Endothelial cell of umbilical vein (primary cell): ENCODE measurements at regions of chr12 and their contacts with region 1.

Region 1: DNA sequence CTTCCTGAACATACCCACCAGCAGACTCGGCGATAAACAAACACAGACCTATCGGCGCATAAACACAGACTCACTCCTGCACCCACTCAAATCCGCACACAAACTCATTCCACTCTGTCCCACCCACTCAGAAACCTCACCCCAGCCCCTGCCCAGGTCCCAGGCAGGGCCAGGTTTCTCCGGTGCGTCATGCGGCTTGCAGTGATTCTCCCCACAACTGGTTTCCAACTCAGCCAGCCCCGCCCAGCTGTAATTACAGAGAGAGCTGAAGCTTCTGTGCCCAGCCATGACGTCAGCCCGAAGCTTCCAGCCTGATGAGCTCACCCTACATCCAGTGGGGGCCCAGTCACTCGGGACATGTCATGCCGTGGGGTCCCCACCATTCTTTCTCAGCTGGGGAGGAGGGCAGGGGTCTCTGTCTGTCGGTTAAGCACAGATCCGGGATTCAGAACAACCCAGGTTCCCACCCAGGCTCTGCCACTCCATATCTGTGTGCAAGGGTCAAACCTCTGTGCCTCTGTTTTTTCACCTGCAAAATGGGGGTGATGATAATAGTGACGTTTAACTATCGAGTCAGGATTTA is 2.4 kb upstream of the HSPB8 start:
- DNase-seq: peak; percentile 69
- H3K4me3 ChIP-seq: peak overlapping the region in 1 of 3 experiments; percentile 15
- H3K27ac ChIP-seq: no peak overlapping the region
- H3K4me1 ChIP-seq: peaks cover 29% of the 10 kb centered on the region
- H3K27me3 ChIP-seq: no peaks in the 10 kb centered on the region
- CTCF ChIP-seq: no peak
- POLR2A ChIP-seq: no peak

Region 2: DNA sequence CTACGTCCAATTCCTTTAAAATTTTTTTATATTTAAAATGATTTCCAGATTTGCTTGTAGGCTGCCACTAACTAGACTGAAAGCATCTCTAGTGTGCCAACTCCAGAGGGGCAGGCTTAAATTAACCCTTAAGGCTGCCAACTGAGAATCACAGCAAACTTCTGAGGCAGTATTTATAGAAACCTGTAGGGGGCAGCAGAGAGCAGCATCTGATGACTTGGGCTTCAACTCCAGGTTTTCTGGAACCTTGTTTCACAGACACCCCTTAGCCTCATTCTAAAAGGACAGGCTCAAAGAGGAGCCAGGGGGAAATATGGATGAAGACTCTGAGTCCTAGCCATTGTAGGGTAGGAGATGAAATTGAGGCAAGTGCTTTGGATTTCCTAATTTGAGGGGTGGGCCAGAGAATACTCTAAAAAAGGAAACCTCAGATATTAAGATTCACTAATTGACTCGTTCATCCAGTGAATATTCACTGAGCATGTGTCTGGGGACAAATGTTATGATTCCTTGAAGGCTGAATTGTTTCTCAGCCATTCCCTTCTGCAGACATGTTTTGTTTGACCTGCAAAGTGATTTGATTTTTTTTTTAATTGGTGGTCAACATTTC is 61.0 kb before region 1 on chr12:
- CTCF ChIA-PET with region 1: no interaction called
- POLR2A ChIA-PET with region 1: no interaction called
- dilution Hi-C with region 1: no loop called
- intact Hi-C with region 1: loop called (anchors 5 kb)
- DNase-seq: peak; percentile 43
- H3K4me3 ChIP-seq: no peak overlapping the region
- H3K27ac ChIP-seq: no peak overlapping the region
- H3K4me1 ChIP-seq: no peaks in the 10 kb centered on the region
- H3K27me3 ChIP-seq: no peaks in the 10 kb centered on the region
- CTCF ChIP-seq: peak; percentile 68 to 75
- POLR2A ChIP-seq: no peak

Region 3: GRCh38 chr12:119153477-119153876 is 22.9 kb before region 1 on chr12:
- CTCF ChIA-PET with region 1: interaction called, 3 read pairs
- POLR2A ChIA-PET with region 1: no interaction called
- dilution Hi-C with region 1: no loop called
- intact Hi-C with region 1: loop called (anchors 1 kb)
- DNase-seq: peak; percentile 30
- H3K4me3 ChIP-seq: no peak overlapping the region
- H3K27ac ChIP-seq: no peak overlapping the region
- H3K4me1 ChIP-seq: no peaks in the 10 kb centered on the region
- H3K27me3 ChIP-seq: no peaks in the 10 kb centered on the region
- CTCF ChIP-seq: no peak
- POLR2A ChIP-seq: no peak